PC-3 (cell line): ENCODE measurements at regions of chr10 and their contacts with region 1.

Region 1: GRCh38 chr10:33410096-33410859 is 75.8 kb upstream of the NRP1 start:
- DNase-seq: peak; percentile 61
- ATAC-seq: peak; percentile 18; the same call in 1 of the 2 replicates
- H3K4me3 ChIP-seq: no peak overlapping the region
- H3K27ac ChIP-seq: no peak overlapping the region
- H3K4me1 ChIP-seq: peaks cover 16% of the 10 kb centered on the region
- H3K27me3 ChIP-seq: no peaks in the 10 kb centered on the region
- CTCF ChIP-seq: no peak

Region 2: DNA sequence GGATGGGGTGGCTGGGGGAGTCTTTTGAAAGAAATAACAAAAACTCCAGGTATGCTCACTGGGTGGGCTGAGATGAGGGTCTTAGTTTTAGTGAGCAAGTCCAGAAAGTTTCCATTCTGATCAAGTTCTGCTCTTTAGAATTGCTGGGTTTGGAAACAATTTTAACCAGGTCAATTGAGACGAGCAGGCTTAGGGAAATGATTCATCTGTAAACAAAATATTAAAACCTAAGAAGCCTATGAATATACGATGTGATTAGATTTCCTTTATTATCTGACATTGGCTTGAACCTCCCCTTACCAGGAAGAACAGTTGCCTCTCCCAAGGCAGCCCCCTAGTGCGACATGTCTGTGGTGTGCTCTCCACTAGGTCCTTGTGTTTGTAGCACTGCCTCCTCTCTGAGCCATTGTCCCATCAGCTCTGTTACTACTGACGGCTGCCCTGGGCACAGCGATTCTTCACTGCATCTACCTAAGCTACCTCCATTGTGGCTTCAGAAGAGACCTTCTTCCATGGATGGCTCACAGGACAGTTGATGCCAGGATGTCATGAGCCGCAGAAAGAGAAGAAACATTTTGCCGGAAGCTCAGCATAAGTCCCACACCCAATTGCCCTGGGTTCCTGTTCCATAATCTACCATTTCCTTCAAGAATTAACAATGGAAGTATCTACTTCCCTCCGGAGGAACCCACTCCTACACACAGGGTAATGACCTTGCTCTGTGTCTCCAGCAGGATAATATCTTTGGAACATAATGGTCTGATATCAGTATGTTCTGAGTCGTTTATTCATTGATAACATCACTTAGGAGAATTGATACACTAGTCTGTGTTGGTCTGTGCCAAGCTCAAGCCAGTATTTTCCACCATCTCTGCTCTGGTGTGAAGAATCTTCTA is 357.1 kb before region 1 on chr10:
- CTCF ChIA-PET with region 1: no interaction called
- POLR2A ChIA-PET with region 1: interaction called, 10 read pairs
- intact Hi-C with region 1: no loop called
- DNase-seq: peak; percentile 50
- ATAC-seq: peak; percentile 87
- H3K4me3 ChIP-seq: no peak overlapping the region
- H3K27ac ChIP-seq: no peak overlapping the region
- H3K4me1 ChIP-seq: peaks cover 11% of the 10 kb centered on the region
- H3K27me3 ChIP-seq: no peaks in the 10 kb centered on the region
- CTCF ChIP-seq: no peak

Region 3: GRCh38 chr10:33349268-33349667 is 61.0 kb before region 1 on chr10:
- CTCF ChIA-PET with region 1: no interaction called
- POLR2A ChIA-PET with region 1: no interaction called
- intact Hi-C with region 1: no loop called
- DNase-seq: no peak
- ATAC-seq: no peak
- H3K4me3 ChIP-seq: no peak overlapping the region; the same call in 1 of the 2 replicates
- H3K27ac ChIP-seq: peak overlapping the region; percentile 53
- H3K4me1 ChIP-seq: peaks cover 80% of the 10 kb centered on the region
- H3K27me3 ChIP-seq: no peaks in the 10 kb centered on the region
- CTCF ChIP-seq: no peak

Region 4: DNA sequence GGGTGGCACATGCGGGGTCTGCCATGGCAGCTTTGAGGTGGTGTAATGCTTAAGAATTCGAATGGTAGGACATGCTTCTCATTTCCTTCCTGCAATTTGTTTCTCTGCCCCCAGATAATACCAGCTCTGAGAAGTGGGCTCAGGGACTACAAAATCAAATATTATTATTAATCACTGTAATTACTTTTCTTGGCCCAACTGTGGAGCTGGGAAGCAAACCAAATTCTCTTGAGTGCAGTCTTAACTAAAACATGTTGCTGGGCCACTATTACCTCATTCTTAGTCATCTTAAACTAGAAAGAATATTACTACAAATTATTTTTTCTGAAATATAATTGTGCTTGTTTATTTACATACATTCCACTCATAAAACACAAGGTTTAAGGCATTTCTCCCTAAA is 490.9 kb after region 1 on chr10:
- CTCF ChIA-PET with region 1: no interaction called
- POLR2A ChIA-PET with region 1: no interaction called
- intact Hi-C with region 1: no loop called
- DNase-seq: peak; percentile 98
- ATAC-seq: peak; percentile 83
- H3K4me3 ChIP-seq: no peak overlapping the region
- H3K27ac ChIP-seq: peak overlapping the region; percentile 68
- H3K4me1 ChIP-seq: peaks cover 29% of the 10 kb centered on the region
- H3K27me3 ChIP-seq: no peaks in the 10 kb centered on the region
- CTCF ChIP-seq: peak; percentile 40; the same call in 1 of the 2 replicates